ENCODE measurements at regions of chr2 and their contacts with region 1.

Region 1: GRCh38 chr2:209208211-209208610 is 215.6 kb upstream of the MAP2 start:
- DNase-seq: peak; percentile 65
- H3K4me3 Mint-ChIP-seq: peak overlapping the region; percentile 74
- H3K27ac Mint-ChIP-seq: no peak overlapping the region
- H3K4me1 Mint-ChIP-seq: no peaks in the 10 kb centered on the region
- H3K27me3 Mint-ChIP-seq: no peaks in the 10 kb centered on the region

Region 2: DNA sequence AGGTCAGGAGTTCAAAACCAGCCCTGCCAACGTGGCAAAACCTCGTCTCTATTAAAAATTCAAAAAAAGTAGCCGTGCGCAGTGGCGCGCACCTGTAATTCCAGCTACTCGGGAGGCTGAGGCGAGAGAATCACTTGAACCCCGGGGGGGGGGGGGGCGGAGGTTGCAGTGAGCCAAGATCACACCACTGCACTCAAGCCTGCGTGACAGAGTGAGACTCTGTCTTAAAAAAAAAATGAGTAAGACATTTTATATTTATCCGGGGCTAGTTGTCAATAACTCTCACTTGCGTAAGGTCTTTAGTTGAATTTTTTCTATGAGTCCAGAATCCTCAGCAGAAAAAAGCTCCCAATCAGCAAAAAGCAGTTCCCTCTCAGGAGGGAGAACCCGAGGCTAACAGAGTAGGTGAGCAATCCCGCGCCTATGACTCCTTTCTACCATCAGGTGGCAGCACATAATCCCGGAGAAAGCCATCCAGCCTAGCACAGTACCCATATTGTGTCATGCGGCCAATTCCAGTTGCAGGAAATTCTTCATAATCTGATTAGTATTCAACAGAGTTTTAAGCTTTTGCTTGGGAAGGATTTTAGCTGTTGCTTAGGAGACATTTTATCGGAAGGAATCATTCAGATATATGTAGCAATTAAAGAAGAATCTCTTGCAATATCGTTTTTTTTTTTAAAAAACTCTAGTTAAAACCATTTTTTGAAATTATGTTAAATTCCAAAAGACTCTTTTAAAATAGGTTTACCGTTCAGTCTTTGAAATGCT is 1033.0 kb before region 1 on chr2:
- intact Hi-C with region 1: loop called (anchors 5 kb)
- DNase-seq: peak; percentile 88
- H3K4me3 Mint-ChIP-seq: no peak overlapping the region
- H3K27ac Mint-ChIP-seq: no peak overlapping the region
- H3K4me1 Mint-ChIP-seq: peaks cover 5% of the 10 kb centered on the region
- H3K27me3 Mint-ChIP-seq: peaks cover 6% of the 10 kb centered on the region

Region 3: DNA sequence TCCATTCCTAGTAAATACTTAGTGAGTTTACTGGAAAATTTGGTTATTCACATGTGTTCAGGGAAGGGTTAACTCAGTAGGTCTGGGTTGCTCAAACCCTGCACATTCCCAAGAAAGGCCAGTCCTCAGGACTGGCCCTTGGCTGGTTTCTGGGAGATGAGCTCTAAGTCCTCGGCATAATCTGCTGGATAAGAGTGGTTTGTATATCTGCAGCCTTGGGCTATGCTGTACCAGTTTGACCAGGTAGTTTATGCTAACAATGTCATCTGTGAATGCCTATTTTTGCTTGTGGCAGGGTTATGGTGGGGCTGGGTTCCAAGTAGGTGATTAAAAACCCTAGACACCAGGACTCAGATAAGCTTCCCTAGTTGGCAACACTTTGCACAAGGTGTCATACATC is 809.0 kb before region 1 on chr2:
- intact Hi-C with region 1: loop called (anchors 5 kb)
- DNase-seq: no peak
- H3K4me3 Mint-ChIP-seq: no peak overlapping the region
- H3K27ac Mint-ChIP-seq: no peak overlapping the region
- H3K4me1 Mint-ChIP-seq: peaks cover 5% of the 10 kb centered on the region
- H3K27me3 Mint-ChIP-seq: peaks cover 31% of the 10 kb centered on the region

Region 4: DNA sequence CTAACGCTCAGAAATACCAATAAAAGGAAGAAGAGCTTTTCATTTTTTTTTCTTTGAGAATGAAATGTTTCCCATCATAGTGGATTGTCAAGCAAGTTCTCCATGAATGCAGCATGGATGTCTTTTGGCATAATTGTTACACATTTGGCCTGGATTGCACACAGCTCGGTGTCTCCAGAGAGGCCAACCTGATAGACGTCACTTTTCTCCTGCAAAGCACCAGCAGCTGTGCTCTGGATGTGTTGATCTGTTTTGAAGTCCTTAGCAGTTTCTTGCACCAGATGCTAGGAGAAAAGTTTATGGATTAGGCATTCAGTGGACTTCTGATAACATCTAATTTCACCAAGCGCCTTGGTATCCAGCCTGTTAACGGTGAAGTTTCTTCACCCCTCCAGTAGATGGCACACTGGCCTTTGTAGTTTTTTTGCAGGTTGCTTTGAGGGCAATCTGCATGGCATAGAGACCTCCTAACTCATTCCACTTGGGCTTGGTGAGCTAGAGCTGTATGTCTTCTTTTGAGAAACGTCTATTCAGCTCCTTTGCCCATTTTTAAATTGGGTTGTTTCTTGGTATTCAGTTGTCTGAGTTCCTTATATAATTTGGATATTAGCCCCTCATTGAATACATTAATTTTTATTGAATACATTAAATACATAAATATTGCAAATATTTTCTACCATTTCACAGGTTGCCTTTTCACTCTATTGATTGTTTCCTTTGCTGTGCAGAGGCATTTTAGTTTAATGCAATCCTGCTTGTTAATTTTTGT is 741.9 kb before region 1 on chr2:
- intact Hi-C with region 1: loop called (anchors 5 kb)
- DNase-seq: peak; percentile 65
- H3K4me3 Mint-ChIP-seq: no peak overlapping the region
- H3K27ac Mint-ChIP-seq: no peak overlapping the region
- H3K4me1 Mint-ChIP-seq: no peaks in the 10 kb centered on the region
- H3K27me3 Mint-ChIP-seq: peaks cover 4% of the 10 kb centered on the region

Region 5: GRCh38 chr2:209191139-209191538 is 17.1 kb before region 1 on chr2:
- intact Hi-C with region 1: no loop called
- DNase-seq: no peak
- H3K4me3 Mint-ChIP-seq: no peak overlapping the region
- H3K27ac Mint-ChIP-seq: no peak overlapping the region
- H3K4me1 Mint-ChIP-seq: no peaks in the 10 kb centered on the region
- H3K27me3 Mint-ChIP-seq: no peaks in the 10 kb centered on the region

Region 6: DNA sequence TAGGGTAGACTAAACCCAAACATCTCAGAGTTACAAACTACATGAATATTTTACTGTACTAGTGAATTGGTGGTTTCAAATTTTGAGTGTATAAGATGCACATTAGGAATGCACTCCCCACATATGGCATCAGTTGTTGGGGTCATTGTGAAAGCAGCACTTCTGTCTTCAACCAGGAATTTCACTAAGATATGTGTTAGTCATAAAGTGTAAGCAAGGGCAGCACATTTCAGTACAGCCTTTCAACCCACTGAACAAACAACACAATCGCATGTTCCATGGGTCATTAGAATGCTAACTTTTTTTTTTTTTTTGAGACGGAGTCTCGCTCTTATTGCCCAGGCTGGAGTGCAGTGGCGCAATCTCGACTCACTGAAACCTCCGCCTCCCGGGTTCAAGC is 51.6 kb after region 1 on chr2:
- intact Hi-C with region 1: no loop called
- DNase-seq: no peak
- H3K4me3 Mint-ChIP-seq: no peak overlapping the region
- H3K27ac Mint-ChIP-seq: no peak overlapping the region
- H3K4me1 Mint-ChIP-seq: no peaks in the 10 kb centered on the region
- H3K27me3 Mint-ChIP-seq: no peaks in the 10 kb centered on the region

Measured in activated CD4-positive, alpha-beta T cell treated with anti-CD3 and anti-CD28 coated beads, Interleukin-2, amount 10 ng/mL, durations not matched to agents 24 days and 14 days (primary cell).